Adrenal gland (tissue), 19 donors: ENCODE measurements at regions of chr6 and their contacts with region 1.

Region 1: GRCh38 chr6:136643850-136644596 is 93.8 kb upstream of the MAP7 start:
- DNase-seq: peak; percentile 85 to 98 (median 93)
- H3K4me3 ChIP-seq: no peak overlapping the region
- H3K27ac ChIP-seq: peak overlapping the region in 4 of 5 donors; percentile 32 to 74 (median 56)
- H3K4me1 ChIP-seq: peaks cover 33 to 78% of the 10 kb centered on the region in 2 donors
- H3K27me3 ChIP-seq: no peaks in the 10 kb centered on the region
- CTCF ChIP-seq: peak; percentile 82 to 93 (median 90)
- POLR2A ChIP-seq: no peak

Region 2: GRCh38 chr6:136792410-136793262 is 148.6 kb after region 1 on chr6 and contains the start of gene MAP3K5:
- intact Hi-C with region 1: loop called (anchors 2 kb)
- DNase-seq: peak; percentile 93 to 97 (median 94)
- H3K4me3 ChIP-seq: peak within 1 kb of the TSS; percentile 74 to 96 (median 88)
- H3K27ac ChIP-seq: peak within 1 kb of the TSS; percentile 92 to 97 (median 97)
- H3K4me1 ChIP-seq: peaks cover 11 to 25% of the 10 kb centered on the region in 2 donors
- H3K27me3 ChIP-seq: no peaks in the 10 kb centered on the region
- CTCF ChIP-seq: peak; percentile 53 to 92 (median 77)
- POLR2A ChIP-seq: peak in 1 of 2 donors; percentile 45
- total RNA-seq, gene MAP3K5: 74.6 to 306 (median 244) TPM

Region 3: DNA sequence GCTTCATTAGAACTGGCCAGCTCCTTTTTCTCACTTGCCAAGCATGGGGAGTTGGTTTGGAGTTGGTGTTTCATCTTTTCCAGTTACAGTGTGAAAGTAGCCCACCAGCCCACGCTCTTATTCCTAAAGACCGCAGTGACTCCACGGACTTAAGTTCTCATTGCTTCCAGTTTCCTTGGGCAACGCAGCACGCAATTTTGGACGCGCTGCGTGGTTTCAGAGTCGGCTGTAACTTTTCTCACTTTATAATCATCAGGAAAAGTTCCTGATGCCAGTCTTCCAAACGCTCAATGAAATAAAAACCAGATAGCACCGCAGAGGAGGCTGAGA is 178.0 kb after region 1 on chr6:
- intact Hi-C with region 1: no loop called
- DNase-seq: peak in 5 of 7 donors; percentile 23 to 71 (median 38)
- H3K4me3 ChIP-seq: peak overlapping the region; percentile 32 to 81 (median 38)
- H3K27ac ChIP-seq: peak overlapping the region; percentile 59 to 98 (median 93)
- H3K4me1 ChIP-seq: peaks cover 5 to 10% of the 10 kb centered on the region in 2 donors
- H3K27me3 ChIP-seq: no peaks in the 10 kb centered on the region
- CTCF ChIP-seq: no peak
- POLR2A ChIP-seq: no peak